OCI-LY7 (cell line): ENCODE measurements at regions of chr18 and their contacts with region 1.

Region 1: GRCh38 chr18:10851824-10852319 is 297.5 kb downstream of the PIEZO2 start:
- DNase-seq: peak; percentile 80
- H3K4me3 ChIP-seq: no peak overlapping the region
- H3K27ac ChIP-seq: peak overlapping the region; percentile 0
- H3K4me1 ChIP-seq: peaks cover 25% of the 10 kb centered on the region
- CTCF ChIP-seq: peak; percentile 97

Region 2: GRCh38 chr18:10787293-10787901 is 64.5 kb before region 1 on chr18:
- CTCF ChIA-PET with region 1: interaction called, 3 read pairs
- POLR2A ChIA-PET with region 1: interaction called, 3 read pairs
- intact Hi-C with region 1: loop called (anchors 1 kb)
- DNase-seq: peak; percentile 85
- H3K4me3 ChIP-seq: no peak overlapping the region
- H3K27ac ChIP-seq: no peak overlapping the region
- H3K4me1 ChIP-seq: peaks cover 10% of the 10 kb centered on the region
- CTCF ChIP-seq: peak; percentile 98

Region 3: GRCh38 chr18:10872304-10872703 is 20.4 kb after region 1 on chr18:
- CTCF ChIA-PET with region 1: no interaction called
- POLR2A ChIA-PET with region 1: interaction called, 20 read pairs
- intact Hi-C with region 1: no loop called
- DNase-seq: no peak
- H3K4me3 ChIP-seq: no peak overlapping the region
- H3K27ac ChIP-seq: peak overlapping the region; percentile 26
- H3K4me1 ChIP-seq: peaks cover 57% of the 10 kb centered on the region
- CTCF ChIP-seq: no peak

Region 4: GRCh38 chr18:11040823-11041656 is 189.2 kb after region 1 on chr18:
- CTCF ChIA-PET with region 1: interaction called, 26 read pairs
- POLR2A ChIA-PET with region 1: interaction called, 14 read pairs
- intact Hi-C with region 1: loop called (anchors 1 kb)
- DNase-seq: peak; percentile 74
- H3K4me3 ChIP-seq: no peak overlapping the region
- H3K27ac ChIP-seq: no peak overlapping the region
- H3K4me1 ChIP-seq: peaks cover 9% of the 10 kb centered on the region
- CTCF ChIP-seq: peak; percentile 97

Region 5: GRCh38 chr18:11279461-11279860 is 427.6 kb after region 1 on chr18:
- CTCF ChIA-PET with region 1: no interaction called
- POLR2A ChIA-PET with region 1: no interaction called
- intact Hi-C with region 1: no loop called
- DNase-seq: no peak
- H3K4me3 ChIP-seq: no peak overlapping the region
- H3K27ac ChIP-seq: no peak overlapping the region
- H3K4me1 ChIP-seq: no peaks in the 10 kb centered on the region
- CTCF ChIP-seq: no peak

Region 6: GRCh38 chr18:11310476-11311086 is 458.7 kb after region 1 on chr18:
- CTCF ChIA-PET with region 1: no interaction called
- POLR2A ChIA-PET with region 1: no interaction called
- intact Hi-C with region 1: loop called (anchors 5 kb)
- DNase-seq: peak; percentile 64
- H3K4me3 ChIP-seq: no peak overlapping the region
- H3K27ac ChIP-seq: no peak overlapping the region
- H3K4me1 ChIP-seq: no peaks in the 10 kb centered on the region
- CTCF ChIP-seq: peak; percentile 93